ENCODE measurements at regions of chr15 and their contacts with region 1.

Region 1: DNA sequence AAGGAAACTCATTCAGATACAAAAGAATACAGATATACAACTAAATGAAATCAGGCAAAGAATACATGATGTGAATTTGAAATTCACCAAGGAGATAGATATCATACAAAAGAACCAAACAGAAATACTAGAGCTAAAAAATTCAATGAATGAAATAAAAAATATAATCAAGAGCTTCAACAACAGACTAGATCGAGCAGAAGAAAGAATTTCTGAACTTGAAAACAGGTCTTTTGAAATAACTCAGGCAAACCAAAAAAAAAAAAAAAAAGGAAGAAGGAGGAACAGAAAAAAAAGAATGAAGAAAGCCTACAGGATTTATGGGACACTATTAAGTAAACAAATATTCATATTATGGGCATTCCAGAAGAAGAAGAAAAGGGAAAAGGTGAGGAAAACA is 137.8 kb downstream of the DMXL2 start:
- H3K4me3 Mint-ChIP-seq: no peak overlapping the region
- H3K27ac Mint-ChIP-seq: no peak overlapping the region
- H3K4me1 Mint-ChIP-seq: peaks cover 23% of the 10 kb centered on the region
- H3K27me3 Mint-ChIP-seq: no peaks in the 10 kb centered on the region

Region 2: DNA sequence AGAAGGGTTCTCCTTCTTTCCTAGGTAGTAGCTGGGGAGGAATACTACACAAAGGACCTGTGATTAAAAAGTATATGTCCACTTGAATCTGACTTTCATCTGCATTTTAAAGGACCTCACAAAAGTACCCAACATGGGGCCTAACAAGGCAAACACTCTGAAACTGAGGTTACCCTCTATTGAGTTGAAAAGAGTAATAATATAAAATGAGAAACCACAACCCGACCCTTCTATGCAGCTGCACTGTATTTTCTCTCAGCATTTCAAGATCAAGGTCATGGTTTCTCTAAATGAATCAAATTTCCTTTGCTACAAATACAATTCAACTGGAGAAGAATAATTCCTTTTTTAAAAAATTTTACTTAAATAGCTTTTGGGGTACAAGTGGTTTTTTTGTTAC is 31.5 kb after region 1 on chr15:
- intact Hi-C with region 1: no loop called
- H3K4me3 Mint-ChIP-seq: no peak overlapping the region
- H3K27ac Mint-ChIP-seq: no peak overlapping the region
- H3K4me1 Mint-ChIP-seq: peaks cover 7% of the 10 kb centered on the region
- H3K27me3 Mint-ChIP-seq: no peaks in the 10 kb centered on the region

Region 3: GRCh38 chr15:51547656-51548055 is 62.9 kb after region 1 on chr15:
- intact Hi-C with region 1: loop called (anchors 10 kb)
- H3K4me3 Mint-ChIP-seq: no peak overlapping the region
- H3K27ac Mint-ChIP-seq: no peak overlapping the region
- H3K4me1 Mint-ChIP-seq: peaks cover 5% of the 10 kb centered on the region
- H3K27me3 Mint-ChIP-seq: no peaks in the 10 kb centered on the region

Region 4: GRCh38 chr15:51622604-51623370 is 138.0 kb after region 1 on chr15 and contains the start of gene DMXL2:
- intact Hi-C with region 1: no loop called
- H3K4me3 Mint-ChIP-seq: peak within 1 kb of the TSS; percentile 99
- H3K27ac Mint-ChIP-seq: peak within 1 kb of the TSS; percentile 100
- H3K4me1 Mint-ChIP-seq: peaks cover 55% of the 10 kb centered on the region
- H3K27me3 Mint-ChIP-seq: no peaks in the 10 kb centered on the region